Activated T-helper 1 cell treated with anti-CD3 and anti-CD28 coated beads, Interleukin-12 subunit alpha, Interleukin-12 subunit beta, Interleukin-2, Interleukin-4 antibody, amounts not matched to agents 30 ng/mL and 10 ng/mL and 1 ng/mL, durations not matched to agents 14 hours and 24 hours and 36 hours (primary cell): ENCODE measurements at regions of chr14 and their contacts with region 1.

Region 1: DNA sequence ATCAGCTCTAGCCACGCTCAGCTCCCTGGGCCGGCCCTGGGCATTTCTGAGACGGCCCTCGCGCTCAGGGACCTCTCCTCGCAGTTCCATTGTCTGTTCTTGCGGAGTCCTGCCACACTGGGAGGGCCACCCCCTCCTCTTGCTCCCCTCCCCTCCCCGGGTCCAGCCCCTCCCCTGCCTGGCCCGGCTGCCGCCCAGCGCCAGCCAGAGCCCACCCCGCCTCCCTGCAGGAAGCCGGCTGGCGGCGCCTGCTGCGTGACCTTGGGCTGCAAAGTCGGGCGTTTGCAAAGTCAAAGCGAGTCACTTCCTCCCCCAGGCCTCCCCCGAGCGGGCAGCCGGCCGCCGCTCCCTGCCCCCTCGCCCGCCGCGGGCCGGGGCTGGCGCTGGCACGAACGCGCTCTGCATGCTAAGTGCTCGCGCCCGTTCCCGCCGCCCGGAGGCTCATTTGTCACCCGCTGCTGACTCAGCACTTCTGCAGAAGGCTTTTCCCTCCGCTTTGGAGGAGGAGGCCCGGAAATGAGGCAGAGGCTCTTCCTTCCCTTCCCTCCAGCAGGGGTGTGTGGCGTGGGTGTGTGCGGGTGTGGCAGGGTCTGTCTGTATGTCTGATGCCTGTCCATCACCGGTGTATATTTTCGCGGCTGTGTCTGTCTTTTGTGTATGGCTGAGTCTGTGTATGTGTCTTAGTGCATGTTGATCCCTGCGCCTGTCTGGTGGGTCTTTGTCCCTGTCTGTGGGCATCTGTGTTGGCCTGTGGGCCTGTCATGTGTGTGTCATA is 72.0 kb downstream of the IRF2BPL start:
- DNase-seq: peak; percentile 85
- H3K4me3 Mint-ChIP-seq: peak overlapping the region; percentile 74
- H3K27ac Mint-ChIP-seq: peak overlapping the region; percentile 90
- H3K4me1 Mint-ChIP-seq: peaks cover 77% of the 10 kb centered on the region
- H3K27me3 Mint-ChIP-seq: no peaks in the 10 kb centered on the region

Region 2: GRCh38 chr14:76761136-76761959 is 195.2 kb before region 1 on chr14 and contains the start of gene VASH1:
- intact Hi-C with region 1: loop called (anchors 10 kb)
- DNase-seq: peak; percentile 56
- H3K4me3 Mint-ChIP-seq: peak within 1 kb of the TSS; percentile 82
- H3K27ac Mint-ChIP-seq: no peak within 1 kb of the TSS
- H3K4me1 Mint-ChIP-seq: peaks cover 24% of the 10 kb centered on the region
- H3K27me3 Mint-ChIP-seq: peaks cover 59% of the 10 kb centered on the region
- total RNA-seq, gene VASH1: 6.1 and 7.1 TPM in 2 replicates

Region 3: GRCh38 chr14:76929927-76930326 is 26.6 kb before region 1 on chr14:
- intact Hi-C with region 1: loop called (anchors 1 kb)
- DNase-seq: peak; percentile 64
- H3K4me3 Mint-ChIP-seq: peak overlapping the region; percentile 46
- H3K27ac Mint-ChIP-seq: peak overlapping the region; percentile 77
- H3K4me1 Mint-ChIP-seq: peaks cover 67% of the 10 kb centered on the region
- H3K27me3 Mint-ChIP-seq: peaks cover 6% of the 10 kb centered on the region

Region 4: DNA sequence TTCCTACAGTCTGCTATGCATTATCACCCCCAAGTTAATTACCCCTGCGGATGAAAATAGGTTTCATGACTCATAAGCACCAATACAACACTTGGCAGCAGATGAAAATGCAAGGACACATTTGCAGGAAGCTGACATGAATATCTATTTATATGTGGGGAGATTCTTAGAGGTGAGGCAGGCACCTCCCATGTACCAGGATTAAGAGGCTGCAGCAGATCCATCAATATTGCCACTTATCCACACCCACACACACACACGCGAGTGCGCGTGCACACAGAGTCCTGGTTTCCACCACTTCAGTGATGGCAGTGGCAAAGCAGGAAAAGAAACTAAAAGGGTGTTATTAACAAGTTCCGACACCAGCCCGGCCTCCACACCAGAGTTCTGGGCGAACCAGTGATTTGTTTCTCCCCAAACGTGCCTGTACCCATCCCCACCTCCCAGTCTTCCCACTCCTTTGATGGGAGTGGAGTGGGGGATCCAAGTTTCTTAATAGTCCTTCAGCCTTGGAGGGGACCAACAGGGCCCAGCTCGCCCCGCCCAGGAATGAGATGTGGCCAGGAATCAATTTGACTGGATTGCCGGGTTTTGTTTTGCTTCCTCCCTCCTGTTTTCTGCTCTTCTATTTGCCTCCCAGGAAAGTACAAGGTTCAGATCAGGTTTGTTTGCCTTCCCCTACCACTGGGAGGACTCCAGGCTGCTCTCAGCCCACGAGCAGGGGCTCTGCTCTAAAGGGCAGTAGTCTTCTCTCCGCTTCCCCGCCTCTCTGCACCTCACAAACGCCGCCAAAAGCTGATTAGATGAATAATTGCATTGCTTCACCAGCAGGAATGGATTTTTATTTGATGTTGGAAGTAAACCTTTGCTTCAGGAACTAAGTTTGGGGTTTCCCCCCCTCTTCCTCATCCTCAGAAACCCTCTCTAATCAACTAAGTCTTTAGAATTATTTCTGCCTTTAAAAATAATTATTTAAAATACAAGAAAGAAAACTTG is 66.8 kb after region 1 on chr14:
- intact Hi-C with region 1: loop called (anchors 1 kb)
- DNase-seq: no peak
- H3K4me3 Mint-ChIP-seq: peak overlapping the region; percentile 3
- H3K27ac Mint-ChIP-seq: peak overlapping the region; percentile 59
- H3K4me1 Mint-ChIP-seq: peaks cover 41% of the 10 kb centered on the region
- H3K27me3 Mint-ChIP-seq: no peaks in the 10 kb centered on the region

Region 5: GRCh38 chr14:77040059-77040740 is 83.7 kb after region 1 on chr14:
- intact Hi-C with region 1: loop called (anchors 1 kb)
- DNase-seq: peak; percentile 83
- H3K4me3 Mint-ChIP-seq: peak overlapping the region; percentile 80
- H3K27ac Mint-ChIP-seq: peak overlapping the region; percentile 91
- H3K4me1 Mint-ChIP-seq: peaks cover 85% of the 10 kb centered on the region
- H3K27me3 Mint-ChIP-seq: no peaks in the 10 kb centered on the region

Region 6: DNA sequence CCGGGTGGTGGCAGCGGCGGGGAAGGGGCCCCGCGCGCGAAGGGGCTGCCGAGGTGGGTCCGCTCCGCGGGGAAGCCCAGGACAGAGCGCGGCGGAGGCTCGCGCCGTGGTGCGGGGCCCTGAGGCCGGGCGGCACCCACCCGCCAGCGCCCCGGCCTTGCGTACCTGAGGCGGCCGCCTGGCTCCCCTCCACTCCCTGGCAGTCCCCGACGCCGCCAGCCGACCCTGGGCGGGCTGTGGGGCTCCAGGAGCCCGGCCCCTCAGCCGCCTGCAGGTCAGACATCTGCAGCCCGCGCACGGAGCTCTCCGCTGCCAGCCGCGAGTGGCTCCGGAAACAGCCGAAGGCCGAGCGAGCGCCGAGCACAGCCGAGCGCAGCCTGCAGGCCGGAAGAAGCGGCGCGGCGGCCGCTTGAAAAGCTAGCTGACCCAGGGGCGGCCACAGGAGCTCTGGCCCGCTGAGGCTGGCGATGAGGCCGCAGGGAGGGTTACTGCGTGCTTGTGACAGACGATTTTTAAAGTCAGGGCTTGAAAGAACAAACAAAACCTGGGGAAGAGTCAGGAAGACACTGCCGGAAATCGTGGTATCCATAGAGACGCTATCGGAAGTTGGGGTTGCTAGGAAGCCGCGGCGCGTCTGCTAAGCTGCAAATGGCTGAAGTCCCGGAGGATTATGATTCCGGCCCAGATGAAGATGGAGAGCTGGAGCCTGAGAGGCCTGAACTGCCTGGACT is 420.4 kb after region 1 on chr14 and contains the starts of genes SAMD15 and TMED8:
- intact Hi-C with region 1: loop called (anchors 10 kb)
- DNase-seq: peak; percentile 80
- H3K4me3 Mint-ChIP-seq: peak within 1 kb of the TSS; percentile 92
- H3K27ac Mint-ChIP-seq: peak within 1 kb of the TSS; percentile 89
- H3K4me1 Mint-ChIP-seq: peaks cover 37% of the 10 kb centered on the region
- H3K27me3 Mint-ChIP-seq: peaks cover 10% of the 10 kb centered on the region
- total RNA-seq, gene SAMD15: 0.29 and 1.1 TPM in 2 replicates
- total RNA-seq, gene TMED8: 28.1 and 28.4 TPM in 2 replicates